Mammary epithelial cell (primary cell): ENCODE measurements at regions of chr11 and their contacts with region 1.

Region 1: DNA sequence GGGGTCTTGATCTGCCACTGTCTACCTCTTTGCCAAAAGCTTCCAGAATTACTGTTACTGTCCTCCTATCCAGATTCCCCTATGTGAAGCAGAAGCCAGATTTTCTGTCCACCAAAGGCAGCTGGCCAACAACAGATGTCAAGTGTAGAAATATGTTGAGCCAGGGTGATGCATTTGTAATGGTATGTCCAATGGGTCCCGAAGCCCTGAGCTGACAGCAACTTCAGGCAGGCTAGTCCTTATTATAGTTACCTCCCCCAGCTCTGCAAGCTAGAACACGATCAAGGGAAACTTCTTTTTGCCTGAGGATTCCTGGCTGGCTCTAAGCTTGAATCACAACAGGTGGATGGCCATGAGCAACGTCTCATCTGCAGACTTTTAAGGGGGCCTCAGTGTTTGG is 10.2 kb downstream of the PAMR1 start:
- DNase-seq: peak; percentile 93
- H3K4me3 ChIP-seq: no peak overlapping the region
- H3K27ac ChIP-seq: no peak overlapping the region
- H3K4me1 ChIP-seq: peaks cover 39% of the 10 kb centered on the region
- H3K27me3 ChIP-seq: no peaks in the 10 kb centered on the region
- CTCF ChIP-seq: no peak

Region 2: GRCh38 chr11:35529971-35530495 is 14.8 kb after region 1 on chr11:
- CTCF ChIA-PET with region 1: no interaction called
- dilution Hi-C with region 1: no loop called
- in situ Hi-C with region 1: no loop called
- intact Hi-C with region 1: loop called (anchors 2 kb)
- DNase-seq: peak; percentile 94
- H3K4me3 ChIP-seq: no peak overlapping the region
- H3K27ac ChIP-seq: peak overlapping the region; percentile 67
- H3K4me1 ChIP-seq: peaks cover 34% of the 10 kb centered on the region
- H3K27me3 ChIP-seq: no peaks in the 10 kb centered on the region
- CTCF ChIP-seq: no peak

Region 3: DNA sequence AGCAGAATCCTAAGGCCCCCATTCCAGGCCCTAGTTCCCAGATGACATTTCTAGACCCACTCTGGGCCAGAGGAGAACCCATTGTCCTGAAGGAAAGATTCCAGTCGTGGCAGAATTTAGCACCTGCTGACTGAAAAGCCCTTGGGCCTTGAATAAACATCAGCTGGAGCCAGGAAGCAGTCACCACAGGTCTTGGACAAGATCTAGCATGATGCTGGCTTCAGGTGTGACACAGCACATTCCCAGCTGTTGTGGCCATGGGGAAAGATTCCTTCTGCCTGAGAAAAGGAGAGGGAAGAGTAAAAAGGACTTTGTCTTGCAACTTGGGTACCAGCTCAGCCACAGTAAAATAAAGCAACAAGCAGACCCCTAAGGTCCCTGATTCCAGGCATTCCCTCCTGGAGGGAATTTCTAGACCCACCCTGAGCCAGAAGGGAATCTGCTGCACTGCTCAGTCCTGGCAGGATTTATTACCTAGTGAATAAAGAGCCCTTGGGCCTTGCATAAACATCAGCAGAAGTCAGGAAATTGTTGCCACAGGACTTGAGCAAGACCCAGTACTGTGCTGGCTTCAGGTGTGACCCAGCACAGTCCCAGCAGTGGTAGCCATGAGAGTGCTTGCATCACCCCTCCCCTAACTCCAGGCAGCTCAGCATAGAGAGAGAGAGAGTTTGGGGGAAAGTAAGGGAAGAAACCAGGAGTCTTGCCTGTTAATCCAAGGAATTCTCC is 52.7 kb after region 1 on chr11:
- CTCF ChIA-PET with region 1: interaction called, 5 read pairs
- dilution Hi-C with region 1: no loop called
- in situ Hi-C with region 1: no loop called
- intact Hi-C with region 1: loop called (anchors 5 kb)
- DNase-seq: peak; percentile 94
- H3K4me3 ChIP-seq: no peak overlapping the region
- H3K27ac ChIP-seq: peak overlapping the region; percentile 70
- H3K4me1 ChIP-seq: peaks cover 22% of the 10 kb centered on the region
- H3K27me3 ChIP-seq: no peaks in the 10 kb centered on the region
- CTCF ChIP-seq: no peak

Region 4: GRCh38 chr11:35579557-35580396 is 64.6 kb after region 1 on chr11:
- CTCF ChIA-PET with region 1: no interaction called
- dilution Hi-C with region 1: no loop called
- in situ Hi-C with region 1: no loop called
- intact Hi-C with region 1: loop called (anchors 5 kb)
- DNase-seq: peak; percentile 76
- H3K4me3 ChIP-seq: no peak overlapping the region
- H3K27ac ChIP-seq: peak overlapping the region; percentile 43
- H3K4me1 ChIP-seq: peaks cover 31% of the 10 kb centered on the region
- H3K27me3 ChIP-seq: no peaks in the 10 kb centered on the region
- CTCF ChIP-seq: no peak